ENCODE measurements at regions of chr1 and their contacts with region 1.

Region 1: DNA sequence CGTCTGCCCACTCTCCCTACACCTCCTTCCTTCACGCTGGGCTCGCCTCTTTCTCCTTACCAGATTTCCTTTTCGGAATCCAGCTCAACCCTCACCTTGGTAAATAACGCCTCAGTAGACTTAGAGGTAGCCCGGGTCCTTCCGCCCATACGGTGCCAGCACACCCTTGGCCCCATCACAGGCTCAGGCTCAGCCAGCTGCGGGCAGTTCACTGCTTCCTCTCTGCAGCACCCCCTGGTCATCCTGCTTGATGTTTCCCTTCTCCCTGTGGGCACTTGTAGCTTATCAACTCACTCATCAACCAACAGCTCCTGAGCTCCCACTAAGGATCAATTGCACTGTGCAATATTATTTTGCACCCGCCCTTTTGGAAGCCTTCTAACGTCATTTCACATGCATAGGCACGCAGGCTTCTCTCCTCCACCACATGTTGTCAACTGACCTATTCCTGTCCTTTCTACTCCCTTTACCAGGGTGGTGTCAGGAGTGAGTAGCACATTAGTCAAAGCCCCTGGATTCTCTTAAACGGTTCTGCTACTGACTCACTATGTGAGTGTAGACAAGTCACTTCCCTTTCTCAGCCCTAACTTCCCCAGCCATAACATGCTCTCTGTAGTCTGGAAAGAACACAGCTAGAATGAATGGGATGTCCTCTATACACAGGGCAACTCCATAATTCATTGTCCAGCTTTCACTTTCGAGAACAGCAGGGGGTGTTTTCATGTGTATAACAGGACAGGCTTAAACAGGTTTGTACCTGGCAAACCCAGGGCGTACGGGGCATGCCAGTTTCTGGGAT is 47.1 kb upstream of the IRF2BP2 start:
- DNase-seq: peak; percentile 100
- H3K4me3 Mint-ChIP-seq: peak overlapping the region; percentile 67
- H3K27ac Mint-ChIP-seq: peak overlapping the region; percentile 91
- H3K4me1 Mint-ChIP-seq: peaks cover 57% of the 10 kb centered on the region
- H3K27me3 Mint-ChIP-seq: no peaks in the 10 kb centered on the region
- CTCF ChIP-seq: no peak

Region 2: GRCh38 chr1:234533975-234534876 is 122.8 kb before region 1 on chr1:
- CTCF ChIA-PET with region 1: interaction called, 4 read pairs
- POLR2A ChIA-PET with region 1: interaction called, 27 read pairs
- intact Hi-C with region 1: loop called (anchors 5 kb)
- DNase-seq: peak; percentile 100
- H3K4me3 Mint-ChIP-seq: peak overlapping the region; percentile 31
- H3K27ac Mint-ChIP-seq: peak overlapping the region; percentile 93
- H3K4me1 Mint-ChIP-seq: peaks cover 43% of the 10 kb centered on the region
- H3K27me3 Mint-ChIP-seq: no peaks in the 10 kb centered on the region
- CTCF ChIP-seq: no peak

Region 3: GRCh38 chr1:234617131-234617985 is 39.7 kb before region 1 on chr1:
- CTCF ChIA-PET with region 1: interaction called, 65 read pairs
- POLR2A ChIA-PET with region 1: interaction called, 543 read pairs
- intact Hi-C with region 1: loop called (anchors 1 kb)
- DNase-seq: peak; percentile 80
- H3K4me3 Mint-ChIP-seq: no peak overlapping the region
- H3K27ac Mint-ChIP-seq: peak overlapping the region; percentile 99
- H3K4me1 Mint-ChIP-seq: peaks cover 70% of the 10 kb centered on the region
- H3K27me3 Mint-ChIP-seq: no peaks in the 10 kb centered on the region
- CTCF ChIP-seq: peak; percentile 28

Region 4: DNA sequence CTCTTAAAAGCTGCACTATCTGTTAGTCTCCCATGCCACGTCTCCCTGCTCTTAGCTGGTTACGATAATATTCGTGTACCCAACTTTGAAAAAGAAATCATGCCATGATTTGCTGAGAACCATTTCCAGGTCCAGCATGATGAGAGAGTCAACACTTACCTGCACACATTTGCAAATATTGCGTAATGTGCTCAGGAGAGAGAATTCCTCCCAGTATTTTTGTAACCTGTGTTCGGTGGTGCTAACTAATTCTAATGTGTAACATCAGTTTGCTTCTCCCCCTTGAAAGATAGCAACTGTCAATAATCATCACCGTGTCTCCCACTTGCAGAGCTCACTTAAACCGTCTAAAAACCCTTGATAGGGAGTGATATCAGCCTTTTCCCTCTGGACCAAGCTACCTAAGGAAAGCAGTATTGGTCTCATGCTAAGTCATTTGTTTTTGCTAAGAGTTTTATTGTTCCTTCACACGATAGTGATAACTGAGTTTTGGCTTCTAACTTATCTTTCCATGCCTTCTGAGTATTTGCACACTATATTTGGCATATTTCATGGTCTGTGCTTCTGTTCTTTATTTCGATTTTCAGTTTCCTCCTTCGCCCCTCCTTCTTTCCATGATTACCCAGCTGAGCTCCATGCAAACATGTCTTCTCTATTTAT is 14.0 kb after region 1 on chr1:
- CTCF ChIA-PET with region 1: interaction called, 12 read pairs
- POLR2A ChIA-PET with region 1: interaction called, 59 read pairs
- intact Hi-C with region 1: no loop called
- DNase-seq: peak; percentile 37
- H3K4me3 Mint-ChIP-seq: no peak overlapping the region
- H3K27ac Mint-ChIP-seq: no peak overlapping the region
- H3K4me1 Mint-ChIP-seq: no peaks in the 10 kb centered on the region
- H3K27me3 Mint-ChIP-seq: no peaks in the 10 kb centered on the region
- CTCF ChIP-seq: no peak

Region 5: DNA sequence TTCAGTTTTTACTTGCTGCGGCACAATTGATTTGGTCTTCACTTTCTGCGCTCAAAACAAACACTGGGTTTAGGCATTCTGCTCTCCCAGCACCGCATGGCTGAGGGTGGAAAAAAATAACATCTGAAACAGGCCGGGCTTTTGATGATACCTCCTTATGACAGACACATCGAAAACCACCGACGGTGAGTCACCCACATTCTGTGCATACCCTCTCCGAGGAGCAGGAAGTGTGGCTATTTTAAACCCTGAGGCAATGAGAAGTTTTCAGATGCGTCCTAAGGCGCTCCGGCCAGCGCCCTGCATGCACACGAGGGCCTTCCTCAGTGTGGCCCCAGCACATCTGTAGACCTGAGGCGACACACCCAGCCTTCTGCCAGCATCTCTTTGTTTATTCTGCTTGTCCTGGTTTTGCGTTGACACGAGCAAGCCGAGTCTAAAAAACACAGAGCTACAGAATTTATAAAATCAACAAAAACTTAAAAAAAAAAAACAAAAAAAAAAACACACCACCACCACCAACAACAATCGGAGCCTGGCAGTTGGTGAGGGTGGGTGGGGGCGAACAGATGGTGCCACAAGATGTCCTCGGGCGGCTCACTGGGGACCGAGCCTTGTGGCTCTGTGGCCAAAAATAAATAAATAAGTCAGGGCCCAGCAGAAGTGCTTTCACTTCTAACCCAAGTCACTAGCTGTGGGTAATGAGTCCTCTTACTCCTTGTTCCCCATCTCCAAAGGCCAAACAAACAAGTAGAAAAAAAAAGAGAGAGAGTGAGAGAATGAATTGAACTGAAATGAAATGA is 115.5 kb after region 1 on chr1:
- CTCF ChIA-PET with region 1: interaction called, 5 read pairs
- POLR2A ChIA-PET with region 1: interaction called, 5 read pairs
- intact Hi-C with region 1: loop called (anchors 1 kb)
- DNase-seq: peak; percentile 100
- H3K4me3 Mint-ChIP-seq: peak overlapping the region; percentile 51
- H3K27ac Mint-ChIP-seq: peak overlapping the region; percentile 95
- H3K4me1 Mint-ChIP-seq: peaks cover 29% of the 10 kb centered on the region
- H3K27me3 Mint-ChIP-seq: no peaks in the 10 kb centered on the region
- CTCF ChIP-seq: no peak

Region 6: GRCh38 chr1:234983554-234984238 is 326.6 kb after region 1 on chr1:
- CTCF ChIA-PET with region 1: no interaction called
- POLR2A ChIA-PET with region 1: no interaction called
- intact Hi-C with region 1: no loop called
- DNase-seq: no peak
- H3K4me3 Mint-ChIP-seq: no peak overlapping the region
- H3K27ac Mint-ChIP-seq: no peak overlapping the region
- H3K4me1 Mint-ChIP-seq: peaks cover 50% of the 10 kb centered on the region
- H3K27me3 Mint-ChIP-seq: no peaks in the 10 kb centered on the region
- CTCF ChIP-seq: no peak

Region 7: GRCh38 chr1:235060607-235061470 is 403.8 kb after region 1 on chr1:
- CTCF ChIA-PET with region 1: interaction called, 5 read pairs
- POLR2A ChIA-PET with region 1: interaction called, 63 read pairs
- intact Hi-C with region 1: no loop called
- DNase-seq: peak; percentile 76
- H3K4me3 Mint-ChIP-seq: no peak overlapping the region
- H3K27ac Mint-ChIP-seq: no peak overlapping the region
- H3K4me1 Mint-ChIP-seq: peaks cover 38% of the 10 kb centered on the region
- H3K27me3 Mint-ChIP-seq: no peaks in the 10 kb centered on the region
- CTCF ChIP-seq: no peak

Measured in MCF 10A (cell line).